Tibial artery (tissue), 4 donors: ENCODE measurements at regions of chr19 and their contacts with region 1.

Region 1: GRCh38 chr19:15332311-15332996 is at the start of gene BRD4:
- DNase-seq: peak; percentile 58 to 82
- H3K4me3 ChIP-seq: peak within 1 kb of the TSS; percentile 86 to 97
- H3K27ac ChIP-seq: peak within 1 kb of the TSS; percentile 96
- H3K4me1 ChIP-seq: peaks cover 0 to 79% (median 51%) of the 10 kb centered on the region in 4 donors
- H3K27me3 ChIP-seq: no peaks in the 10 kb centered on the region
- CTCF ChIP-seq: no peak

Region 2: DNA sequence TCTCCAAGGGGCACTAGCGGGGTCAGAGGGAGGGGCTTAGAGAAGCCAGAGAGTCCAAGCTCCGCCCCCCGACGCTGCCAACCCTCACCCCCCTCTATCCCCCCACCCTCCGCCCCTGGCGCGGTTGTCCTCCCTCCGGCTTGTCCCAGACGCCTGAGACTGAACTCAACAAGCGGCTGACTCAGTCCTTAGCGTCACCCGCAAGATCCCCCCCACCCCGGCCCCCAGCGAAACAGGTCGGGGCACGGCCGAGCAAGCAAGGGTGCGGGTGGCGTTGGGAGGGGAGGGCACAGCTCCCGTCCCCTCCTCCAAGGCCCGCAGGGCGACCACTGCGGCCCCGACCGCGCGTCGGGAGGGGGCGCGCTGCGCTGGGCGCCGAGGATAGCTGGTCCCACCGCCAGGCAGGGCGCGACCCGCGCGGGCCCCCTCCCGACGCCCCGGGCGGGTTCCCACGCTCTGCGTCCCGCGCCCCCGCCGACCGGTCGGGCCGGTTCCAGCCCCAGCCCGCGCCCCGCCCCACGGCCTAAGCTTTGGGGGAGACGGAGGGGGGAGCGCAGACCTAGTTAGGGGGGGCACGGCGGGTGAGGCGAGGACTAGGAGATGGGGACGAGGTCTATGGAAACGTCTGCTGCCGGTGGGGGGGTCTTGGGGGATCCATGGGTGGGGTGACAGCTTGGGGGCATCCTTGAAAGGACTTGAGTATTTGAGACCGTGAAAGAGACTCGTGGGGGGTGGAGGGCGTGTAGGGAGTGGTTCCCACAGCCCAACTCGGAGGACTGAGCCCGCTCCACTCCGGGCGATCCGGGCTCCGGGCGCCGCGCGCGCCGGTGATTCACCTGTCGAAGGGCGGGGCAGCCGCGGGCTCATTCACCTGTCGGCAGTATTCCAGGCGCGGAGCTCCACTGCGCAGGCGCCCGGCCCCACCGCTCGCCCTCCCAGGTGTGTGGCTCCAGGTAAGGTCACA is 136.8 kb before region 1 on chr19:
- intact Hi-C with region 1: loop called (anchors 5 kb)
- DNase-seq: peak; percentile 74 to 97
- H3K4me3 ChIP-seq: peak overlapping the region; percentile 48 to 78
- H3K27ac ChIP-seq: peak overlapping the region; percentile 98 to 99
- H3K4me1 ChIP-seq: peaks cover 0 to 86% (median 68%) of the 10 kb centered on the region in 4 donors
- H3K27me3 ChIP-seq: no peaks in the 10 kb centered on the region
- CTCF ChIP-seq: peak; percentile 4 to 13

Region 3: GRCh38 chr19:15264061-15264932 is 68.2 kb before region 1 on chr19:
- intact Hi-C with region 1: loop called (anchors 10 kb)
- DNase-seq: peak; percentile 78 to 87
- H3K4me3 ChIP-seq: no peak overlapping the region
- H3K27ac ChIP-seq: peak overlapping the region; percentile 67 to 79
- H3K4me1 ChIP-seq: peaks cover 13 to 64% (median 57%) of the 10 kb centered on the region in 4 donors
- H3K27me3 ChIP-seq: no peaks in the 10 kb centered on the region
- CTCF ChIP-seq: peak; percentile 78 to 87

Region 4: GRCh38 chr19:15717809-15718208 is 385.4 kb after region 1 on chr19:
- intact Hi-C with region 1: no loop called
- DNase-seq: no peak
- H3K4me3 ChIP-seq: no peak overlapping the region
- H3K27ac ChIP-seq: no peak overlapping the region
- H3K4me1 ChIP-seq: no peaks in the 10 kb centered on the region
- H3K27me3 ChIP-seq: peaks cover 0 to 12% of the 10 kb centered on the region in 2 donors
- CTCF ChIP-seq: no peak